IMR-90 (cell line): ENCODE measurements at regions of chr2 and their contacts with region 1.

Region 1: GRCh38 chr2:237998530-237998929 is 31.7 kb downstream of the UBE2F start:
- DNase-seq: peak; percentile 41
- ATAC-seq: no peak
- H3K4me3 ChIP-seq: no peak overlapping the region
- H3K27ac ChIP-seq: no peak overlapping the region
- H3K4me1 ChIP-seq: peaks cover 3% of the 10 kb centered on the region; the same call in 1 of the 2 replicates
- H3K27me3 ChIP-seq: no peaks in the 10 kb centered on the region
- CTCF ChIP-seq: no peak
- POLR2A ChIP-seq: no peak
- RAD21 ChIP-seq: no peak

Region 2: GRCh38 chr2:237931205-237931721 is 67.3 kb before region 1 on chr2:
- CTCF ChIA-PET with region 1: no interaction called
- POLR2A ChIA-PET with region 1: no interaction called
- dilution Hi-C with region 1: no loop called
- in situ Hi-C with region 1: no loop called
- intact Hi-C with region 1: loop called (anchors 5 kb)
- DNase-seq: peak; percentile 92
- ATAC-seq: peak; percentile 80
- H3K4me3 ChIP-seq: no peak overlapping the region
- H3K27ac ChIP-seq: peak overlapping the region; percentile 71; the same call in 1 of the 2 replicates
- H3K4me1 ChIP-seq: peaks cover 20% of the 10 kb centered on the region
- H3K27me3 ChIP-seq: no peaks in the 10 kb centered on the region
- CTCF ChIP-seq: no peak
- POLR2A ChIP-seq: no peak
- RAD21 ChIP-seq: no peak

Region 3: GRCh38 chr2:237955640-237956401 is 42.7 kb before region 1 on chr2:
- CTCF ChIA-PET with region 1: no interaction called
- POLR2A ChIA-PET with region 1: no interaction called
- dilution Hi-C with region 1: no loop called
- in situ Hi-C with region 1: no loop called
- intact Hi-C with region 1: no loop called
- DNase-seq: no peak
- ATAC-seq: peak; percentile 85
- H3K4me3 ChIP-seq: peak overlapping the region; percentile 24; the same call in 1 of the 2 replicates
- H3K27ac ChIP-seq: no peak overlapping the region
- H3K4me1 ChIP-seq: peaks cover 2% of the 10 kb centered on the region; the same call in 1 of the 2 replicates
- H3K27me3 ChIP-seq: peaks cover 23% of the 10 kb centered on the region
- CTCF ChIP-seq: no peak
- POLR2A ChIP-seq: no peak
- RAD21 ChIP-seq: no peak

Region 4: DNA sequence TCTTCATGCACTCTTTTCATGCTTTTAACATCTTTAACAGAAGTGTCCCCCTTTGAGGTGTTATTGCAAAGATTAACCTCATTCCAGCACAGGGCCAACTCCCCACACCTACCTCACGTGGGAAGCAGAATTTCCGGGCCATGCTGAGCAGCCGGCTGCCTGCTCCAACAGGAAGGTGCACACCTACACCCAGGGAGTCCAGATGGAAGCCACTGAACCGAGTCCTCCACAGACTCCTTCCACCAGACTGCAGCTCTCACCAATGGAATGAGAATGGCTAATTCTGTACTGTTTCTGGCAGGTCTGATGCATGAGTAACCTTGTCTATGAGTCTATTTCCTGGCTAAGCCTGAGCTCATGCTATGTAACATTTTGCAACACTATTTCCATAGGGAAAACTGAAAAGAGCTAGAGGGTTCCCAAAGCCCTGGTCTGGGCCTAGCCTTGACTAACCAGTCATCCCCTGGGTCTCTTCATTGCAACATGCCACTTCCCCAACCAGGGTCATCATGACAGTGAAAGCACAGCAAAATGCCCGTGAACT is 171.2 kb after region 1 on chr2:
- CTCF ChIA-PET with region 1: no interaction called
- POLR2A ChIA-PET with region 1: no interaction called
- dilution Hi-C with region 1: no loop called
- in situ Hi-C with region 1: no loop called
- intact Hi-C with region 1: loop called (anchors 10 kb)
- DNase-seq: peak; percentile 98
- ATAC-seq: peak; percentile 80
- H3K4me3 ChIP-seq: no peak overlapping the region
- H3K27ac ChIP-seq: peak overlapping the region; percentile 97
- H3K4me1 ChIP-seq: peaks cover 31% of the 10 kb centered on the region
- H3K27me3 ChIP-seq: no peaks in the 10 kb centered on the region
- CTCF ChIP-seq: no peak
- POLR2A ChIP-seq: peak; percentile 88; the same call in 1 of the 2 replicates
- RAD21 ChIP-seq: peak; percentile 22; the same call in 1 of the 2 replicates

Region 5: GRCh38 chr2:238560234-238560633 is 561.7 kb after region 1 on chr2:
- CTCF ChIA-PET with region 1: no interaction called
- POLR2A ChIA-PET with region 1: no interaction called
- dilution Hi-C with region 1: no loop called
- in situ Hi-C with region 1: no loop called
- intact Hi-C with region 1: no loop called
- DNase-seq: no peak
- ATAC-seq: no peak
- H3K4me3 ChIP-seq: no peak overlapping the region
- H3K27ac ChIP-seq: no peak overlapping the region
- H3K4me1 ChIP-seq: no peaks in the 10 kb centered on the region; the same call in 1 of the 2 replicates
- H3K27me3 ChIP-seq: peaks cover 19% of the 10 kb centered on the region
- CTCF ChIP-seq: no peak
- POLR2A ChIP-seq: no peak
- RAD21 ChIP-seq: no peak